Activated B cell treated with CpG ODN at 0.5 μM for 24 hours (primary cell): ENCODE measurements at regions of chr6 and their contacts with region 1.

Region 1: DNA sequence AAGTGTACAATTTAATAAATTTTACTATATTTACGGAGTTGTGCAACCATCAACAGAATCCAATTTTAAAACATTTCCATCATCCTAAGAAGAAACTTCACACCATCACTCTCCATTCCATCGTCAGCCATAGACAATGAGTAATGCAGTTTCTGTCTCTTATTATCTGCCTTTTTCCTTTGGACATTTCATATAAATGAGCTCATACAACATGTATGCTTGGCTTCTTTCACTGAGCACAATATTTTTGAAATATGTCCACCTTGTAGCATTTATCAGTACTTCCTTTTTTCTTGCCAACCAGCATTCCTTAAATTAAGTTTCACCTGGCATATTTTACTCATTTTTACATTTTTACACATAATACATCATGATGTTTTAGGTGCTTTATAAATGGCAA is 22.7 kb upstream of the HIVEP1 start:
- DNase-seq: no peak
- ATAC-seq: no peak
- H3K4me3 Mint-ChIP-seq: no peak overlapping the region
- H3K27ac Mint-ChIP-seq: no peak overlapping the region
- H3K4me1 Mint-ChIP-seq: no peaks in the 10 kb centered on the region
- H3K27me3 Mint-ChIP-seq: no peaks in the 10 kb centered on the region
- CTCF ChIP-seq: no peak

Region 2: DNA sequence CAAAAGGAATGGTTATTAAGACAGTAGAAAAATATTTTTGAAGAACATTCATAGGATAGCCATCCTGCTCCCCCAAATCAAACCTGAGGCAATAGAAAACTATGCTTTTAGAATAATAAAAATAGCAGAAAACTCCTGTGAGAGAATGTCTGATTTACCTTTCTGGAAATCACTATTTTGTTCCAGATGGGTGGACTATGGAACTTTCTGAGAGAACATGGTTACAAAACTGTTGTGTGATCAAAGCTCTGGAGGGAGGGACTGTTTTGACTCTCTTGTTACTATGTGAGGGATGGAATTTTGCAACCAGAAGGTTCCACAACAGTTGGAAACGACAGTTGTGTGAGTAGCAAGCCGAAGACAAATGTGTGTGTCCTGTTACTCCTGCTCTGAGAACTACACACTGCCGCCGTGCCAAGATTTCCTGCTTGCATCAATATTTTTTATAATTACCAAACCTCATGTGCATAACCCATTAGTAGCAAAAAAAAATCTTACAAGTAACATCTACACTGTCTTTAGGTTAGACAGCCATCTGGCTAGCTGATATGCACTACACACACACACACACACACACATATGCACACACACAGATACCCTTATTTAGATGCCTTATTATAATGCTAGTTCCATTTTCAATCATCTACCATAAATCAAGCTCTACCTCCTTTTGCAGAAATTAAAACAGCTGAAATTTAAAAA is 11.8 kb after region 1 on chr6:
- CTCF ChIA-PET with region 1: no interaction called
- POLR2A ChIA-PET with region 1: no interaction called
- intact Hi-C with region 1: loop called (anchors 2 kb)
- DNase-seq: no peak
- ATAC-seq: no peak
- H3K4me3 Mint-ChIP-seq: no peak overlapping the region
- H3K27ac Mint-ChIP-seq: no peak overlapping the region
- H3K4me1 Mint-ChIP-seq: no peaks in the 10 kb centered on the region
- H3K27me3 Mint-ChIP-seq: no peaks in the 10 kb centered on the region
- CTCF ChIP-seq: no peak